PC-9 (cell line): ENCODE measurements at regions of chr10 and their contacts with region 1.

Region 1: GRCh38 chr10:70169649-70170364 is 507 bp downstream of the SAR1A start:
- DNase-seq: no peak
- H3K4me3 ChIP-seq: peak overlapping the region; percentile 98
- H3K27ac ChIP-seq: 0 out of 2 replicates have a peak overlapping the region, but pooled peaks have one; percentile 68
- H3K4me1 ChIP-seq: peaks cover 36% of the 10 kb centered on the region
- H3K27me3 ChIP-seq: no peaks in the 10 kb centered on the region
- CTCF ChIP-seq: no peak

Region 2: DNA sequence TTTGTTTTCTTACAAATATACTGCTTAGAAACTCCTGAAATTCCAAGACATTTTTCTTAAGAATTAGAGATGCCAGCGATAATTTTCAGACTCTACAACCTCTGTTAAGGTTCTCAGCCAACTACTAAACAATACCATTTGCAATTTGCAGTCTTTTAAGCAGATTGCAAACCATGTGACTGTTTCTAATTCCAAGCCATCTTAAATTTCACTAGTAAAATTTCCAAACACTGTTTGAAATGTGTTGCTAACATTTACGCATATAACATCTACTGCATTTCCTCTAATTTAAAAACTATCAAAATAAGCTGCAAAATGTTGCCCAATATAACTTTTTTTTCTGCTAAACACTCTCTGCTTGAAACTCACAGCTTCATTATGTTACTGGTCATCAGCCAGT is 173.2 kb before region 1 on chr10:
- CTCF ChIA-PET with region 1: no interaction called
- POLR2A ChIA-PET with region 1: no interaction called
- intact Hi-C with region 1: no loop called
- DNase-seq: no peak
- H3K4me3 ChIP-seq: no peak overlapping the region
- H3K27ac ChIP-seq: no peak overlapping the region
- H3K4me1 ChIP-seq: no peaks in the 10 kb centered on the region
- H3K27me3 ChIP-seq: peaks cover 18% of the 10 kb centered on the region
- CTCF ChIP-seq: no peak

Region 3: GRCh38 chr10:70130878-70131559 is 38.8 kb before region 1 on chr10:
- CTCF ChIA-PET with region 1: no interaction called
- POLR2A ChIA-PET with region 1: no interaction called
- intact Hi-C with region 1: no loop called
- DNase-seq: peak; percentile 22 to 94
- H3K4me3 ChIP-seq: peak overlapping the region; percentile 100
- H3K27ac ChIP-seq: peak overlapping the region; percentile 90
- H3K4me1 ChIP-seq: peaks cover 20% of the 10 kb centered on the region
- H3K27me3 ChIP-seq: no peaks in the 10 kb centered on the region
- CTCF ChIP-seq: no peak

Region 4: GRCh38 chr10:70158113-70158512 is 11.7 kb before region 1 on chr10:
- CTCF ChIA-PET with region 1: no interaction called
- POLR2A ChIA-PET with region 1: interaction called, 40 read pairs
- intact Hi-C with region 1: no loop called
- DNase-seq: no peak
- H3K4me3 ChIP-seq: no peak overlapping the region
- H3K27ac ChIP-seq: no peak overlapping the region
- H3K4me1 ChIP-seq: no peaks in the 10 kb centered on the region
- H3K27me3 ChIP-seq: no peaks in the 10 kb centered on the region
- CTCF ChIP-seq: no peak